Activated CD4-positive, alpha-beta memory T cell treated with anti-CD3 and anti-CD28 coated beads, Interleukin-2, amount 10 ng/mL, durations not matched to agents 7 days and 5 days (primary cell): ENCODE measurements at regions of chr10 and their contacts with region 1.

Region 1: GRCh38 chr10:92573798-92574547 is at the start of gene IDE:
- DNase-seq: peak; percentile 86
- H3K4me3 Mint-ChIP-seq: peak within 1 kb of the TSS; percentile 83
- H3K27ac Mint-ChIP-seq: peak within 1 kb of the TSS; percentile 79
- H3K4me1 Mint-ChIP-seq: peaks cover 35% of the 10 kb centered on the region
- H3K27me3 Mint-ChIP-seq: no peaks in the 10 kb centered on the region
- total RNA-seq, gene IDE: 24.6 to 27.9 TPM

Region 2: GRCh38 chr10:92387289-92387940 is 186.6 kb before region 1 on chr10:
- CTCF ChIA-PET with region 1: no interaction called
- POLR2A ChIA-PET with region 1: no interaction called
- DNase-seq: peak; percentile 20
- H3K4me3 Mint-ChIP-seq: no peak overlapping the region
- H3K27ac Mint-ChIP-seq: no peak overlapping the region
- H3K4me1 Mint-ChIP-seq: no peaks in the 10 kb centered on the region
- H3K27me3 Mint-ChIP-seq: peaks cover 2% of the 10 kb centered on the region

Region 3: GRCh38 chr10:92517034-92517655 is 56.8 kb before region 1 on chr10:
- CTCF ChIA-PET with region 1: interaction called, 102 read pairs
- POLR2A ChIA-PET with region 1: interaction called, 15 read pairs
- DNase-seq: peak; percentile 64
- H3K4me3 Mint-ChIP-seq: no peak overlapping the region
- H3K27ac Mint-ChIP-seq: no peak overlapping the region
- H3K4me1 Mint-ChIP-seq: peaks cover 3% of the 10 kb centered on the region
- H3K27me3 Mint-ChIP-seq: no peaks in the 10 kb centered on the region